CD4-positive, alpha-beta T cell (primary cell): ENCODE measurements at regions of chr1 and their contacts with region 1.

Region 1: GRCh38 chr1:21232044-21232443 is 55.3 kb upstream of the EIF4G3 start:
- DNase-seq: peak in 8 of 14 experiments; percentile 12 to 74 (median 32)
- ATAC-seq: peak; percentile 58
- H3K4me3 ChIP-seq: no peak overlapping the region
- H3K4me3 Mint-ChIP-seq: no peak overlapping the region
- H3K27ac ChIP-seq: no peak overlapping the region
- H3K27ac Mint-ChIP-seq: no peak overlapping the region
- H3K4me1 ChIP-seq: no peaks in the 10 kb centered on the region
- H3K4me1 Mint-ChIP-seq: no peaks in the 10 kb centered on the region
- H3K27me3 ChIP-seq: no peaks in the 10 kb centered on the region
- H3K27me3 Mint-ChIP-seq: no peaks in the 10 kb centered on the region
- CTCF ChIP-seq: peak; percentile 95

Region 2: DNA sequence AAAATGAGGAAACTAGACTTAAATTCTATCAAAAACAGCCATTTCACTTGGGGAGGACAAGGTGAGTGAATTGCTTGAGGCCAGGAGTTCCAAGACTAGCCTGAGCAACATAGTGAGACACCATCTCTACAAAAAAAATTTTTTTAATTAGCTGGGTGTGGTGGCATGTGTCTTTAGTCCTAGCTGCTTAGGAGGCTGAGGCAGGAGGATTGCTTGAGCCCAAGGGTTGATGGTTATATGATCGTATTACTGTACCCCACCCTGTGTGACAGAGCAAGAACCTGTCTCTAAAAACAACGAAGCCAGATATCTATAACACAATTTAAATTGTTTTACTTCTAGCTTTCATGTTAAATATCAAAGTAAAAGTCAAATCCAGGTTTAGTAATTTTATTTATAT is 318.8 kb before region 1 on chr1:
- CTCF ChIA-PET with region 1: no interaction called
- POLR2A ChIA-PET with region 1: no interaction called
- intact Hi-C with region 1: no loop called
- DNase-seq: no peak
- ATAC-seq: no peak
- H3K4me3 ChIP-seq: no peak overlapping the region
- H3K4me3 Mint-ChIP-seq: no peak overlapping the region
- H3K27ac ChIP-seq: no peak overlapping the region
- H3K27ac Mint-ChIP-seq: no peak overlapping the region
- H3K4me1 ChIP-seq: no peaks in the 10 kb centered on the region
- H3K4me1 Mint-ChIP-seq: no peaks in the 10 kb centered on the region
- H3K27me3 ChIP-seq: no peaks in the 10 kb centered on the region
- H3K27me3 Mint-ChIP-seq: no peaks in the 10 kb centered on the region
- CTCF ChIP-seq: no peak

Region 3: GRCh38 chr1:21176586-21177555 is 55.2 kb before region 1 on chr1 and contains the start of gene EIF4G3:
- CTCF ChIA-PET with region 1: no interaction called
- POLR2A ChIA-PET with region 1: no interaction called
- intact Hi-C with region 1: no loop called
- DNase-seq: peak; percentile 98 to 100 (median 99)
- ATAC-seq: peak; percentile 94
- H3K4me3 ChIP-seq: peak within 1 kb of the TSS; percentile 88
- H3K4me3 Mint-ChIP-seq: peak within 1 kb of the TSS; percentile 89
- H3K27ac ChIP-seq: peak within 1 kb of the TSS; percentile 72 to 75
- H3K27ac Mint-ChIP-seq: peak within 1 kb of the TSS; percentile 85
- H3K4me1 ChIP-seq: peaks cover 17% of the 10 kb centered on the region
- H3K4me1 Mint-ChIP-seq: peaks cover 20% of the 10 kb centered on the region
- H3K27me3 ChIP-seq: no peaks in the 10 kb centered on the region
- H3K27me3 Mint-ChIP-seq: no peaks in the 10 kb centered on the region
- CTCF ChIP-seq: no peak
- total RNA-seq, gene EIF4G3: 18.8 to 21.5 TPM

Region 4: DNA sequence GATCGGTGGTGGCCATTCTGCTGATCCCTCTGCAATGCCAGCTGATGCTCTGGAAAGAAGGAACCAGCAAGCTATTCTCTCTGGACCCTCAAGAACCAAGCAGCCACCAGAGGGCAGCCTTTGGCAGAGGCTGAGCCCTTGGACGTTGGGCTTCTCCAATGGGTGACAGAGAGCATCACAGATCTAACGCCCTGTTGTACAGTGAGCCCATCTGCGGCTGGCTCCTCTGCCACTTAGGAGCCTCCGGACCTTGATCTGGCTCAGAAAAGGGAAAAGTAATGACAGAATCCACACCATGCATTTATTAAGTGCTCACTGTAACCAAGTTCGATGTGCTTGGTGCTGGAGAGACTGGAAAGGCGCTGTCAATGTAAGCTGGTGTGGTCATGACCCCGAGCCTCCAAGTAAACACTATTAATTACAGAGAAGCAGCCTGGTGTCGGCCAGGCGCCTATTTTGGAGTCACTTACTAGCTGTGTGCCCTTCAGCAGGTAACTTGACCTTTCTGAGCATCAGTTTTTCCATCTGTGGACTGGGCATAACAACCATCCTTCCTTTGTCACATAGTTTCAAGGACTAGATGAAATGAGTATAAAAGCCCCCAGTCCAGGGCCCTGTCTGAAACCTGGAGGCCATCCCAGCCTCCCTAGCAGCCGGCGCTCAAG is 23.4 kb after region 1 on chr1:
- CTCF ChIA-PET with region 1: interaction called, 10 read pairs
- POLR2A ChIA-PET with region 1: no interaction called
- intact Hi-C with region 1: no loop called
- DNase-seq: peak; percentile 78 to 90 (median 83)
- ATAC-seq: peak; percentile 87
- H3K4me3 ChIP-seq: no peak overlapping the region
- H3K4me3 Mint-ChIP-seq: no peak overlapping the region
- H3K27ac ChIP-seq: no peak overlapping the region
- H3K27ac Mint-ChIP-seq: peak overlapping the region; percentile 19
- H3K4me1 ChIP-seq: peaks cover 28% of the 10 kb centered on the region
- H3K4me1 Mint-ChIP-seq: peaks cover 25% of the 10 kb centered on the region
- H3K27me3 ChIP-seq: no peaks in the 10 kb centered on the region
- H3K27me3 Mint-ChIP-seq: no peaks in the 10 kb centered on the region
- CTCF ChIP-seq: peak; percentile 78

Region 5: DNA sequence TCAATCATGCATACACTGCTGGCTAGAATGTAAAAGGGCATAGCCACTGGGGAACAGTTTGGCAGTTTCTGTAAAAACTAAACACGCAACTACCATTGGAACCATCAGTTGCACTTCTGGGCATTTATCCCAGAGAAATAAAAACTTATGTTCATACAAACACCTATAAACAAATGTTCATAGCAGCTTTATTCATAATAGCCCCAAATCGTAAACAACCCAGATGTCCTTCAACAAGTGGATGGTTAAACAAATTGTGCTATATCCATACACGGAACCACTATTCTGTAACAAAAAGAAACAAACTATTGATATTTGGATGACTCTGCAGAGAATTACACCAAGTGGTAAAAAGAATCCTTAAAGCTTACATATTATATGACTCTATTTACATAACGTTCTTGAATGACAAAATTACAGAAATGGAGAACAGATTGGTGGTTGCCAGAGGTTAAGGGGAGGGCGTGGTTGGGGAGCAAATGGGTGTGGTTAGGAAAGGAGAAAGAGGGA is 1717.8 kb after region 1 on chr1:
- CTCF ChIA-PET with region 1: no interaction called
- POLR2A ChIA-PET with region 1: no interaction called
- intact Hi-C with region 1: loop called in 1 of 2 experiments (anchors 10 kb)
- DNase-seq: no peak
- ATAC-seq: no peak
- H3K4me3 ChIP-seq: no peak overlapping the region
- H3K4me3 Mint-ChIP-seq: no peak overlapping the region
- H3K27ac ChIP-seq: no peak overlapping the region
- H3K27ac Mint-ChIP-seq: no peak overlapping the region
- H3K4me1 ChIP-seq: no peaks in the 10 kb centered on the region
- H3K4me1 Mint-ChIP-seq: no peaks in the 10 kb centered on the region
- H3K27me3 ChIP-seq: peaks cover 16 to 23% of the 10 kb centered on the region in 2 experiments
- H3K27me3 Mint-ChIP-seq: peaks cover 53% of the 10 kb centered on the region
- CTCF ChIP-seq: no peak